Activated CD8-positive, alpha-beta T cell treated with anti-CD3 and anti-CD28 coated beads for 36 hours (primary cell): ENCODE measurements at regions of chr18 and their contacts with region 1.

Region 1: GRCh38 chr18:47120428-47120827 is 29.9 kb downstream of the HDHD2 start:
- DNase-seq: peak; percentile 5
- ATAC-seq: peak; percentile 80
- H3K4me3 Mint-ChIP-seq: no peak overlapping the region
- H3K27ac Mint-ChIP-seq: peak overlapping the region; percentile 28
- H3K4me1 Mint-ChIP-seq: peaks cover 25% of the 10 kb centered on the region
- H3K27me3 Mint-ChIP-seq: no peaks in the 10 kb centered on the region
- CTCF ChIP-seq: no peak

Region 2: GRCh38 chr18:47175908-47176575 is 55.6 kb after region 1 on chr18 and contains the start of gene IER3IP1:
- CTCF ChIA-PET with region 1: no interaction called
- POLR2A ChIA-PET with region 1: interaction called, 3 read pairs
- intact Hi-C with region 1: loop called (anchors 10 kb)
- DNase-seq: peak; percentile 92
- ATAC-seq: peak; percentile 94
- H3K4me3 Mint-ChIP-seq: peak within 1 kb of the TSS; percentile 8
- H3K27ac Mint-ChIP-seq: no peak within 1 kb of the TSS
- H3K4me1 Mint-ChIP-seq: peaks cover 6% of the 10 kb centered on the region
- H3K27me3 Mint-ChIP-seq: no peaks in the 10 kb centered on the region
- CTCF ChIP-seq: no peak
- total RNA-seq, gene IER3IP1: 11.1 to 12.7 TPM

Region 3: DNA sequence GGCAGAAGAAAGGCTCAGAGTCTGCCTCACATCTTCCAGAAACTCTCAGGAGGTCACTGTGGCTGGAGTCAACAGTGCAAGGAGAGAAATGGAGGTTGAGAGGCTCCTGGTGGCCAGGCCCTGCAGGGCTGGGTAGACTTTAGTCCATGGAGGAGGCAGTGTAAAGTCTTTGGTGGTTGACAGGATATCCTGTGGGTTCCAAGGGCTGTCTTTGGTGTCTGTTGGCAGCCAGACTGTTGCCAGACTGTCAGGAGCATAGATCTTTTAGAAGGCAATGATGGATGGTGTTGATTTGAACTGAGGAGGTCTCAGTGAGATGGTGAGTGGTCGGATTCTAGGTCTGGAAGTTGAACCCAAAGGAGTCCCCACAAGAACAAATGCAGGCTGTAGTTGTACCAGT is 176.0 kb after region 1 on chr18:
- CTCF ChIA-PET with region 1: no interaction called
- POLR2A ChIA-PET with region 1: no interaction called
- intact Hi-C with region 1: no loop called
- DNase-seq: no peak
- ATAC-seq: no peak
- H3K4me3 Mint-ChIP-seq: no peak overlapping the region
- H3K27ac Mint-ChIP-seq: no peak overlapping the region
- H3K4me1 Mint-ChIP-seq: no peaks in the 10 kb centered on the region
- H3K27me3 Mint-ChIP-seq: peaks cover 9% of the 10 kb centered on the region
- CTCF ChIP-seq: no peak